Ovary (tissue), 10 donors: ENCODE measurements at regions of chr2 and their contacts with region 1.

Region 1: GRCh38 chr2:38315707-38316333 is 61.3 kb downstream of the ATL2 start:
- DNase-seq: no peak
- H3K4me3 ChIP-seq: no peak overlapping the region
- H3K27ac ChIP-seq: no peak overlapping the region
- H3K4me1 ChIP-seq: no peaks in the 10 kb centered on the region
- H3K27me3 ChIP-seq: no peaks in the 10 kb centered on the region
- CTCF ChIP-seq: peak; percentile 58 to 66 (median 60)
- EP300 ChIP-seq: no peak
- POLR2A ChIP-seq: no peak

Region 2: DNA sequence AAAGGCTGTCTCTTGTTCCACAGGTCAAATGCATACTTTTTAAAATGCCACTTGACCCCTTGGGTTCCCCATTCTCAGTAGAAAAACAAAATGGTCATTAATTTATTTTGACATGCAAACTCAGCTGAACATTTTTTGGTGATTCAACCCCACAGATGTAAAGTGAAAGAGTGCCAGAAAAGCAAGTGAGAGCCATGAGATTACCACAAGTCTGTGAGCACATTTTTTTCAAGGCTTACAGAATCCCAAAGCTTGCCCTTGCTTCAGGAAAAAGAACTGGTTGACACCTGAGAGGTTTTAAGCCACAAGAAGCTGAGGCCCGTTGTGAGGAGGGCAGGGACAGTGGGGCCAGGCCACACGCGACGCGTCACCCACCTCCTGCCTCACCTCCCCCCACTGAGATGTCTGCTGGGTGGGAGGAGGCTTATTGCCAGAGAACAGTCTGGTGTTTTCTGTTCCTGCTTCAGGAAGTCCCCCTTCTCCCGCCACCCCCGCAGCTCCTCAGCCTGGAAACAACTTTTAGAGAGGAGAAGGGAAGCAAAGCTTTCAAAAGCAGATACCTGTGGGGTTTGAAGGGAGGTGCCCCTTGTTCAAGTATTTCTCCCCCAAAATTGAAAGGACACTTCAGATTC is 169.4 kb before region 1 on chr2:
- intact Hi-C with region 1: no loop called
- DNase-seq: peak; percentile 42 to 76 (median 70)
- H3K4me3 ChIP-seq: no peak overlapping the region
- H3K27ac ChIP-seq: peak overlapping the region; percentile 23 to 77
- H3K4me1 ChIP-seq: peaks cover 10% of the 10 kb centered on the region
- H3K27me3 ChIP-seq: no peaks in the 10 kb centered on the region
- CTCF ChIP-seq: no peak
- EP300 ChIP-seq: no peak
- POLR2A ChIP-seq: no peak

Region 3: DNA sequence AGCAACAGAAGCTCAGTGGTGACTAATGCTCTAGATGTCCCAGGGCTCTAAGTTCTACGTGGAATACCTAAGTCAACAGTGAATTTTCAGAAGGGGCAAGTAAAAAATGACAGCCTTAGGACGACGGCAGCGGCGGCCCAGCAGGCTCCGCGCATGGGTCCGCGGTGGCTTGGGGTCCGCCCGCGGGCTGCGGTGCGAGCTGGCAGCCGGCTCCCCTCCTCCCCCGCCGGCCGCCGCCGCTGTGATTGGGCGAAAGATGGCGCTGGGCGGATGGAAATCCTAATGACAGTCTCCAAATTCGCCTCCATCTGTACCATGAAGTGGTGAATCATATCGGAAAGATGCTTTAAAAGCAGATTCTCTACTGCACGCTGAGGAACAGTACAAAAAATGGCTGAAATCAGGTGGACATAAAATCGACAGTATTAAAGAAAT is 212.2 kb after region 1 on chr2:
- intact Hi-C with region 1: loop called in 2 of 4 experiments (anchors 10 kb)
- DNase-seq: peak; percentile 51 to 73 (median 56)
- H3K4me3 ChIP-seq: peak overlapping the region; percentile 34
- H3K27ac ChIP-seq: peak overlapping the region in 1 of 2 donors; percentile 77
- H3K4me1 ChIP-seq: peaks cover 4% of the 10 kb centered on the region
- H3K27me3 ChIP-seq: no peaks in the 10 kb centered on the region
- CTCF ChIP-seq: no peak
- EP300 ChIP-seq: no peak
- POLR2A ChIP-seq: no peak

Region 4: DNA sequence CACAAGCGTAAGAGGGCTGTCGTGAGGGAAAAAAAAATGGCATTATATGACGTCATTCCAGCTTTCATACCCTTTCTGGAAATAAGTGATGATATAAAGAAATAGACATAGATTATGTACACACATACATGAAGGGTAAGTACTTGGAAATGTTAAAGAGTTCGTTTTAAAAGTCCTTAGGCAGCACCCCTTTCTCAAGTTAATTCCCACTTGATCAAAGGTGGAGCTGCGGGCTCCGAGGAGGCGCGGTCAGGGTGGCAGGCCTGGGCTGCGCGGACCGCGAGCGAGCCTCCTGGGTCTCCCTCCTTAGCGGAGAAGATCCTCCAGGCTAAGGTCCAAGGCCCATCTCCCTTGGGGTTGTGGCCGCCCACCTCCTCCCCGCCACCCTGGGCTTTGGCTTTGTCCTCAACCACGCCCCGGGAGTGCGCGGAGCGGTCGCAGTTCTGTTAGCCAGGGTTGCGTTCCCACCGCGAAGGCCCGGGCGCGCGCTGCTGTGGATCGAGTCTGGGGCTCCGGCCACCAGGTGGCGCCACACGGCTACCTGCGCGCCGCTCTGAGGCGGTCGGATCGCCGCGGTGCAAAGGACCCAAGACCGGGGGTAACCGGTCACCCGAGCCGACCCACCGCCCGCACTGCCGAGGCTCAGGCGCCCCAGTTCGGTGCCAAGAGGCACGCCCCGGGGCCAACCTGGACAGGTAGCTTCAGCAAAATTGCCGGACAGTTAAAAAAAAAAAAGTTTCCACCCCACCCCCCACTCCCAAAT is 220.1 kb after region 1 on chr2:
- intact Hi-C with region 1: loop called in 1 of 4 experiments (anchors 10 kb)
- DNase-seq: peak; percentile 82 to 93 (median 91)
- H3K4me3 ChIP-seq: peak overlapping the region; percentile 46
- H3K27ac ChIP-seq: no peak overlapping the region
- H3K4me1 ChIP-seq: no peaks in the 10 kb centered on the region
- H3K27me3 ChIP-seq: no peaks in the 10 kb centered on the region
- CTCF ChIP-seq: peak; percentile 91 to 98 (median 92)
- EP300 ChIP-seq: no peak
- POLR2A ChIP-seq: no peak